Activated CD4-positive, alpha-beta T cell treated with anti-CD3 and anti-CD28 coated beads, Interleukin-2, amount 10 ng/mL, durations not matched to agents 24 days and 14 days (primary cell): ENCODE measurements at regions of chr6 and their contacts with region 1.

Region 1: GRCh38 chr6:31652925-31653718 is 661 bp upstream of the BAG6 start:
- DNase-seq: no peak
- H3K4me3 Mint-ChIP-seq: peak overlapping the region; percentile 94
- H3K27ac Mint-ChIP-seq: peak overlapping the region; percentile 100
- H3K4me1 Mint-ChIP-seq: peaks cover 58% of the 10 kb centered on the region
- H3K27me3 Mint-ChIP-seq: peaks cover 3% of the 10 kb centered on the region

Region 2: GRCh38 chr6:31541658-31542521 is 111.2 kb before region 1 on chr6 and contains the start of gene DDX39B:
- intact Hi-C with region 1: loop called (anchors 1 kb)
- DNase-seq: peak; percentile 98
- H3K4me3 Mint-ChIP-seq: peak within 1 kb of the TSS; percentile 81
- H3K27ac Mint-ChIP-seq: peak within 1 kb of the TSS; percentile 90
- H3K4me1 Mint-ChIP-seq: peaks cover 50% of the 10 kb centered on the region
- H3K27me3 Mint-ChIP-seq: no peaks in the 10 kb centered on the region
- total RNA-seq, gene DDX39B: 696 and 720 TPM in 2 replicates